ENCODE measurements at regions of chr22 and their contacts with region 1.

Region 1: GRCh38 chr22:35821654-35822053 is 104.0 kb downstream of the APOL5 start:
- DNase-seq: no peak
- H3K4me3 Mint-ChIP-seq: no peak overlapping the region
- H3K27ac Mint-ChIP-seq: no peak overlapping the region
- H3K4me1 Mint-ChIP-seq: peaks cover 38% of the 10 kb centered on the region
- H3K27me3 Mint-ChIP-seq: no peaks in the 10 kb centered on the region
- CTCF ChIP-seq: no peak

Region 2: DNA sequence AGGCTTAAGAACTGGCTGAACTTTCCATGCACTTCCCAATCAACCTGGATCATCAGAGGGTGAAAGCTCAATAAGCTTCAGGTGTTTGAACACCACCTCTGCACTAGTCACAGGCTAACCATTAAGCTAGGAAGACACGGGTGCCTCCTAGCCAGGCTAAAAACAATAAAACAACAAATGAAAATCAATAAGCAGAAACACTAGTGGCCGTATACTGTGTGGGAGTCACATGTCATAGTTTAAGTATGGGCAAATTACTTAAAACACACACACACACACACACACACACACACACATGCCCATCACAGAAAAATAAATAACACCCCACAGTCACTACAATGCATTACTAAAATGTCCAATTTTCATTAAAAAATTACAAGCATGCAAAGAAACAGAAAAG is 18.8 kb before region 1 on chr22:
- CTCF ChIA-PET with region 1: no interaction called
- POLR2A ChIA-PET with region 1: interaction called, 3 read pairs
- intact Hi-C with region 1: loop called (anchors 1 kb)
- DNase-seq: no peak
- H3K4me3 Mint-ChIP-seq: no peak overlapping the region
- H3K27ac Mint-ChIP-seq: no peak overlapping the region
- H3K4me1 Mint-ChIP-seq: peaks cover 15% of the 10 kb centered on the region
- H3K27me3 Mint-ChIP-seq: no peaks in the 10 kb centered on the region
- CTCF ChIP-seq: no peak